HEK293T (cell line): ENCODE measurements at regions of chr4 and their contacts with region 1.

Region 1: DNA sequence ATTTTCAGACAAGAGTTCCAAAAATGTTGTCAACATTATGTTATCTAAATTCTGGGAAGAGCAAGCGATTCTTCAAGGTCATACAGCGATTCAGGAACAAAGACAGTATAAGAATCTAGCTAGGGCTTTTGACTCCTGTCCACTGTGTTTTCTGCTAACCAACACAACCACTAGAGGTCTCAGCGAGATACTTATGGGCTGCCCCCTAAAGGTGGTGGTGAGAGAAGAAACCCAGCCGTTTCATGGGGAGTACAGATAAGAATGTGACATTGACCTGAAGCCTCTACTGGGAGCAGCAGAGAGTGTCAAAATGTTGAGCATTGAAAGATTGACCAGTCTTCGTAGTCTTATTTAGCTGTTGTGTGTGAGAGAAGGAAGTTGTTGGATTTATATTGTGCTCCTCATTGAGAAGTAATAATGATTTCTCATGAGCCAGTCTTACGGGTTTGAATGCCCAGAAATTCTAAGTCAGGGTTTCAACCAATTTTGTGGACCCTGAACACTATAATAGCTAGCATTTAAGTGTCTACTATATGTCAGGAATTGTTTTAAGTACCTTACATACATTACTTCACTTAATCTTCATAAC is 168.3 kb downstream of the SPRY1 start:
- DNase-seq: peak; percentile 81

Region 2: DNA sequence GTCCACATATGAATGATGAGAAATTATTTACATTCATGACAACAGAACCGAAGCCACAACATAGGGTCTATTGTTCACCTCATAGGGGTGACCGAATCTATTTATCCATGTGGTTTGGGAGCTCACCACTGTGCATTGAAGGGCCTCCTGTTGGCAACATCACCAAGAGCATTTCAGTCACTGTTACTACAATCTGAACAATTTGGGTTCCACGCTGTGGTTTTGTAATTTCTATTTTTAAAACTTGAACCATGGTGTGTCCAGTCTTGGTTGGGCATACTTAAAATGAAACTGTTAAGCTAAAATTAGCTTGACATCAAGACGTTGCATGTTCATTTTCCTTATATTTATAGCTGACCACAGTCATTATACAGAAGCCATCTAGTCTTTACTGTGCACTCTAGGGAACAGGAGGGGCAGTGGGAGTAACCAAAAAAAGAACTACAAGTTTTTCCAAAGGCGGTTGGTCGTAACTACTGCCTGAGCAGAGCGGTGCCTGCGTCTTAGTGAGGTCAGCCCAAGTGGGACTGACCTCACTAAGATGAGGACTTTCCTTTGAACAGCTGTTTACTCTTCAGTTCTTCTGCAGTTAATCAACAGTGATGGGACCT is 23.9 kb after region 1 on chr4:
- CTCF ChIA-PET with region 1: interaction called, 19 read pairs
- POLR2A ChIA-PET with region 1: no interaction called
- DNase-seq: peak; percentile 20